ENCODE measurements at regions of chr10 and their contacts with region 1.

Region 1: DNA sequence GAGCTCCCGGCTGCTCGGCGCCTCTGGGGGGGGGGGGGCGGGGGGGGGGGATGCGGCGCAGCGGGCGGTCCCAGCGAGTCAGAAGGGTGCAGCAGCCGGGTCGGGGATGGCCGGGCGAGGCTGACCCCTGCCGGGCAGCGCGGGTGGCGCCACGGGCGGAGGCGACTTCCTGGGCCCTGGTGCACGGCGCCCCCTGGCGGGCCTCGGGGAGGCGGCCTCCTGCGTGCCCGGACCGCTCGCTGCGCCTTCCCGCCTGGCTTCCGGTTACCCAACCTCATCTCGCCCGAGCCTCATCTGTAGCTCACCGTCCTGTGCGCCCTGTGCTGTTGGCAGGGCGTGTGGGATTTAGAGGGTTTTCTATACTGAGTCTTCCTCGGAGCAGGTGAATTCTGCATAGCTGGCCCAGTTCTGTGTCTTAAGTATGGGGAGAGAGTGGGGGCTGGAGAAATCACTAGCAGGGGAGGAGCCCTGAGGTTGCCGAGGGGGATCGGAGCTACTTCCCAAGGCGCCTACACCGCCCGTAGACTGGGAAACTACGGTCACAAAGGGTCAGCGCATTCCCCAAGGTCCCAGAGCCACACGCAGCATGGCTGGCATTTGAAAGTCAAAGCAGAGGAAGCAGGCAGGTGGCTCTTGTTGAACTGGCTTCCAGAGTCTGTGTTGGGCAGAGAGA is 28.3 kb upstream of the WDFY4 start:
- H3K4me3 Mint-ChIP-seq: peak overlapping the region; percentile 72
- H3K27ac Mint-ChIP-seq: peak overlapping the region; percentile 70
- H3K4me1 Mint-ChIP-seq: peaks cover 67% of the 10 kb centered on the region
- H3K27me3 Mint-ChIP-seq: peaks cover 44% of the 10 kb centered on the region

Region 2: DNA sequence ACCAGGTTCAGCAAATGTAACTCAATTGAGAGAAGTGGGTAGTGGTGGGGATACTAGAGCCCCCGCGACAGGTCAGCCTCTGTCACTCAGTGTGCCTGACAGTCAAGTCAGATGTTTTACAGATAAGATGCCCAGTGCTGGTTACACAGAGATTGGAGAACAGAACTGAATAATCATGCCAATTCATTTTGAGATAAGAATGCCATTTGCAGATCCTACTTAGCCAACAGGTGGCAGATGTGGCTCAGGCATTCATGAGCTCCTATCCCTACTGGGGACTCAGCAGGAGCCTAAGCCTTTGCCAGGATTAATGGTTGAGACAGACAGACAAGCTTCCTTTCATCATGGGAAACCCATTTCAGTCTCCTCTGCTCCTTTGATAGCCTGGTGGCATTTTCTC is 212.1 kb before region 1 on chr10:
- intact Hi-C with region 1: loop called (anchors 10 kb)
- H3K4me3 Mint-ChIP-seq: no peak overlapping the region
- H3K27ac Mint-ChIP-seq: no peak overlapping the region
- H3K4me1 Mint-ChIP-seq: peaks cover 12% of the 10 kb centered on the region
- H3K27me3 Mint-ChIP-seq: peaks cover 3% of the 10 kb centered on the region

Region 3: GRCh38 chr10:48608279-48608681 is 48.1 kb before region 1 on chr10:
- intact Hi-C with region 1: loop called (anchors 1 kb)
- H3K4me3 Mint-ChIP-seq: no peak overlapping the region
- H3K27ac Mint-ChIP-seq: peak overlapping the region; percentile 43
- H3K4me1 Mint-ChIP-seq: peaks cover 91% of the 10 kb centered on the region
- H3K27me3 Mint-ChIP-seq: peaks cover 5% of the 10 kb centered on the region

Region 4: GRCh38 chr10:48639632-48640031 is 16.7 kb before region 1 on chr10:
- intact Hi-C with region 1: loop called (anchors 1 kb)
- H3K4me3 Mint-ChIP-seq: peak overlapping the region; percentile 45
- H3K27ac Mint-ChIP-seq: peak overlapping the region; percentile 77
- H3K4me1 Mint-ChIP-seq: peaks cover 57% of the 10 kb centered on the region
- H3K27me3 Mint-ChIP-seq: peaks cover 4% of the 10 kb centered on the region

Region 5: GRCh38 chr10:48981310-48981907 is 325.0 kb after region 1 on chr10:
- intact Hi-C with region 1: loop called (anchors 5 kb)
- H3K4me3 Mint-ChIP-seq: no peak overlapping the region
- H3K27ac Mint-ChIP-seq: no peak overlapping the region
- H3K4me1 Mint-ChIP-seq: no peaks in the 10 kb centered on the region
- H3K27me3 Mint-ChIP-seq: no peaks in the 10 kb centered on the region